ENCODE measurements at regions of chr15 and their contacts with region 1.

Region 1: DNA sequence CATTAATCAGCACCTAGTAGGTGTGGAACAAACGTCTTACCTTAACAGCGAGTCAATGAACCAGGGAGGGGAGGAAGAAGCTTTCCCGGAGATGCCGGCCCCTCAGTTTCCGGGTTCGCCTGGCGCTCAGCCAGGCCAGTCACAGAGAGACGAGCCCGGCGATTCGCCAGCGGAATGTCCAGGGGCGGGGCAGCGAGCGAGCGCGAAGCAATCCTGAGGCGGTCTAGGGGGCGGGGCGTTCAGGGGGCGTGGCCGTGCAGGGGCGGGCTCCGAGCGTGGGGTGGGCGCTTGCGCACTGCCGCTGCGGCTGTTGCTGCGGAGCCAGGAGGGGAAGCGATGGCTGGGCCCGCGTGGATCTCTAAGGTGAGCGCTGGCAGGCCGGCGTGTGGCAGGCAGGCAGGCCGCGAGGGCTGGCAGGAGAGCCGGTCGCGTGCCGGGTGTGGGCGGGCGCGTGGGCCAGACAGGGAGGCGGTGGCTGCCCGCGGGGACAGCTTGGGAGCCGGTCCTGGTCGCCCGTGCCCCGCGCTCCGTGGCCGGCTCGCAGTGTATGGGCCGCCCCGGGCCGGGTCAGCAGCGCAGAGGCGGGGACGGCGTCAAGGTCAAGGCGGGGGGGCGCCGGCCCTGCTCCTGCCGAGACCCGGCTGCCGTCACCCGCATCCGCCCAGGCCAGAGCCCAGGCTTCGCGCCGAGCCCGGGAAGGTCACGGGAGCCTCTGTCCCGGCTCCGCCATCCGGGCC is at the start of gene IDH3A:
- DNase-seq: peak; percentile 96 to 98
- H3K4me3 ChIP-seq: peak within 1 kb of the TSS; percentile 73
- H3K4me3 Mint-ChIP-seq: peak within 1 kb of the TSS; percentile 93
- H3K27ac Mint-ChIP-seq: peak within 1 kb of the TSS; percentile 82
- H3K4me1 ChIP-seq: 0 out of 2 replicates have a peak, but pooled peaks cover 3% of the 10 kb centered on the region
- H3K4me1 Mint-ChIP-seq: no peaks in the 10 kb centered on the region
- H3K27me3 ChIP-seq: no peaks in the 10 kb centered on the region
- H3K27me3 Mint-ChIP-seq: no peaks in the 10 kb centered on the region
- CTCF ChIP-seq: no peak
- total RNA-seq, gene IDH3A: 67.3 and 71.1 TPM in 2 replicates

Region 2: GRCh38 chr15:77201665-77202064 is 947.6 kb before region 1 on chr15:
- CTCF ChIA-PET with region 1: no interaction called
- POLR2A ChIA-PET with region 1: no interaction called
- intact Hi-C with region 1: no loop called
- DNase-seq: no peak
- H3K4me3 ChIP-seq: no peak overlapping the region
- H3K4me3 Mint-ChIP-seq: no peak overlapping the region
- H3K27ac Mint-ChIP-seq: no peak overlapping the region
- H3K4me1 ChIP-seq: no peaks in the 10 kb centered on the region
- H3K4me1 Mint-ChIP-seq: no peaks in the 10 kb centered on the region
- H3K27me3 ChIP-seq: no peaks in the 10 kb centered on the region
- H3K27me3 Mint-ChIP-seq: no peaks in the 10 kb centered on the region
- CTCF ChIP-seq: no peak

Region 3: GRCh38 chr15:78049691-78050440 is 99.4 kb before region 1 on chr15:
- CTCF ChIA-PET with region 1: no interaction called
- POLR2A ChIA-PET with region 1: interaction called, 14 read pairs
- intact Hi-C with region 1: no loop called
- DNase-seq: no peak
- H3K4me3 ChIP-seq: no peak overlapping the region
- H3K4me3 Mint-ChIP-seq: no peak overlapping the region
- H3K27ac Mint-ChIP-seq: no peak overlapping the region
- H3K4me1 ChIP-seq: peaks cover 33% of the 10 kb centered on the region
- H3K4me1 Mint-ChIP-seq: peaks cover 12% of the 10 kb centered on the region
- H3K27me3 ChIP-seq: no peaks in the 10 kb centered on the region
- H3K27me3 Mint-ChIP-seq: no peaks in the 10 kb centered on the region
- CTCF ChIP-seq: no peak

Region 4: DNA sequence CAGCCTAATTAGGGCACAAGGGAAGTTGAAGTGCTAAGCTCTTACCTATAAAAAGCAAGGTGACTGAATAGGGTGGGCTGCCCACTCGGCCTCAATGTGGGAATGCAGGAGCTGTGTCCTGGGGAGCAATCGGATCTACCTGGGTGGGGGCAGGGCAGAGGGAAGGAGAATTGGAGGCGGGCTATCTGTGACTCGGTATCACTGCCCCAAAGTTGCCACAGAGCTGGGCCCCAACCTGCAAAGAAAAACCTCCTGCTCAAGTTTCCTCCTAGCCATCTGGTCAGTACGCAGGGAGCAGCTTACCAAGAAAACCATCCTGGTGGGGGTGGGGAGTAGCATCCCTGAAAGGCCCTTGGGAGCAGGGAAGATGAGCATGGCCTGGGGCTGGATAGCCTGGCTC is 28.7 kb before region 1 on chr15:
- CTCF ChIA-PET with region 1: no interaction called
- POLR2A ChIA-PET with region 1: no interaction called
- intact Hi-C with region 1: no loop called
- DNase-seq: no peak
- H3K4me3 ChIP-seq: no peak overlapping the region
- H3K4me3 Mint-ChIP-seq: no peak overlapping the region
- H3K27ac Mint-ChIP-seq: no peak overlapping the region
- H3K4me1 ChIP-seq: no peaks in the 10 kb centered on the region
- H3K4me1 Mint-ChIP-seq: no peaks in the 10 kb centered on the region
- H3K27me3 ChIP-seq: no peaks in the 10 kb centered on the region
- H3K27me3 Mint-ChIP-seq: no peaks in the 10 kb centered on the region
- CTCF ChIP-seq: no peak

Region 5: GRCh38 chr15:78131295-78132061 is 17.8 kb before region 1 on chr15 and contains the start of gene CIB2:
- CTCF ChIA-PET with region 1: no interaction called
- POLR2A ChIA-PET with region 1: no interaction called
- intact Hi-C with region 1: loop called (anchors 1 kb)
- DNase-seq: peak; percentile 59 to 82
- H3K4me3 ChIP-seq: peak within 1 kb of the TSS; percentile 69
- H3K4me3 Mint-ChIP-seq: peak within 1 kb of the TSS; percentile 81
- H3K27ac Mint-ChIP-seq: peak within 1 kb of the TSS; percentile 57
- H3K4me1 ChIP-seq: peaks cover 18% of the 10 kb centered on the region
- H3K4me1 Mint-ChIP-seq: peaks cover 17% of the 10 kb centered on the region
- H3K27me3 ChIP-seq: no peaks in the 10 kb centered on the region
- H3K27me3 Mint-ChIP-seq: no peaks in the 10 kb centered on the region
- CTCF ChIP-seq: peak; percentile 14 to 62
- total RNA-seq, gene CIB2: 0.67 and 0.75 TPM in 2 replicates